ENCODE measurements at regions of chr4 and their contacts with region 1.

Region 1: DNA sequence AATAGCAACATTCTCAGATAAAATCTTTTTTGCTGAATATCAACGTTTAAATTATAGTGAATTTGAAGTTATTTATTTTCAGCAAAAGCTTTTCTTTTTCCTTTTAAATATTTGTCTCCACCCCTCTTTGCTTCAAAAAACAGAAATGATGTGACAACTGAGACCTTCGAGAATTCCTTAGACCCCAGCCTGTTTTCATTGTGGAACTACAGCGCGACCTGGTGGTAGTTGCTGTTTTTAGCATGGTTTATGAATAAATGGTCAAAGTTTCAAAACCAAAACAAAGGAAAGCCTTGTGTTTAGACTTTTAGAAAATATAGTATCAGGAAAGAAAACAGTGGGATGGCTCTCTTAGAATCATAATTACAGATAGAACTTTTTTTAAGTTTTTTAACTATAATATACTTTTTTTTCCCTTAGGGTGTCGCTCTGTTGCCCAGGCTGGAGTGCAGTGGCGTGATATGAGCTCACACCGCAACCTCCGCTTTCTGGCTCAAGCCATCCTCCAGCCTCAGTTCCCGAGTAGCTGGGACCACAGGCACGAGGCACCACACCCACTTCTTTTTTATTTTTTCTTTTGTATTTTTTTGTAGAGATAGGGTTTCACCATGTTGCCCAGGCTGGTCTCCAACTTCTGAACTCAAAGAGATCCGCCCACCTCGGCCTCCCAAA is 26.8 kb upstream of the TMEM184C start:
- DNase-seq: peak in 4 of 5 donors; percentile 22 to 51 (median 45)
- ATAC-seq: peak in 2 of 4 donors; percentile 53 to 65
- H3K4me3 ChIP-seq: peak overlapping the region in 2 of 12 donors; percentile 28 to 33
- H3K27ac ChIP-seq: peak overlapping the region in 1 of 12 donors; percentile 16
- H3K4me1 ChIP-seq: peaks cover 0 to 12% (median 0%) of the 10 kb centered on the region in 12 donors
- H3K27me3 ChIP-seq: no peaks in the 10 kb centered on the region
- CTCF ChIP-seq: peak; percentile 54 to 83 (median 71)
- POLR2A ChIP-seq: no peak

Region 2: DNA sequence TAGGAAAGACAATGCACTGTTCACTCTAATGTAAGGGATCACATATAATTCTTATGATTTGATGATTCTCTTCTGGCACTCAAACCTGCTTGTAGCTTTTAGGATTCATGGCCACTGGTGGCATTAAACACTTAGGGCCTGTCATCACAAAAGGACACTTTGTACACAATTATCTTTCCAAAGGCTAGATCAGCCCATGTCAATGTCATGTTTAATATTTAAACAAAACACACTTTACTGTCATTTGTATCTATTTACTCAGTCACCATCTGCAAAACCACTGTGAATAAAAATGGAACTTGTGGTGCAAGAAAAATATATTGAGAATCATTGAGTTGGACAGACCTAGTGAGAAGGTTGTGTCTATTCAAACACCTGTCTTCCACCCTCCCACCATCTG is 561.1 kb before region 1 on chr4:
- intact Hi-C with region 1: loop called in 4 of 10 experiments (anchors 5 to 10 kb)
- DNase-seq: no peak
- ATAC-seq: no peak
- H3K4me3 ChIP-seq: no peak overlapping the region
- H3K27ac ChIP-seq: no peak overlapping the region
- H3K4me1 ChIP-seq: no peaks in the 10 kb centered on the region
- H3K27me3 ChIP-seq: no peaks in the 10 kb centered on the region
- CTCF ChIP-seq: no peak
- POLR2A ChIP-seq: no peak

Region 3: DNA sequence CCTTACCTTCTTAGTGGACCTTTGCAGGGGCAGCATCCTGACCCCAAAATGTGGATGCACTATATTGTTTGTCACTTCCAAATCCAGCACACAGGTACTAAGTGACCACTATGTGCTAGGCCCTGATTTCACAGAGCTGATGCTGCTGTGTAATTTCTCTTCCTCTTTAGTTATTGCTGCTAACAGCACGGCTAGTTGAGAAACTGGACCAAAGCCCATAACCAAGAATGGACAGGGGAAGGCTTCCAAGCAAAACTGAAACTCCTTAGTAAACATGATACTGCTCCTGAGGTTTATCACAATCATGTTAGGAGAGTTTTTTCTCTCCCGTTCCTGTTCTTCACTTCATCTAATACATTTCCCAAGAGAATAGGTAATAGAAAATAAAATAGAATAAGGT is 471.9 kb before region 1 on chr4:
- intact Hi-C with region 1: loop called in 5 of 10 experiments (anchors 5 kb)
- DNase-seq: peak in 1 of 5 donors; percentile 35
- ATAC-seq: peak; percentile 65 to 76 (median 72)
- H3K4me3 ChIP-seq: no peak overlapping the region
- H3K27ac ChIP-seq: peak overlapping the region in 5 of 12 donors; percentile 14 to 52 (median 42)
- H3K4me1 ChIP-seq: peaks cover 0 to 41% (median 18%) of the 10 kb centered on the region in 12 donors
- H3K27me3 ChIP-seq: no peaks in the 10 kb centered on the region
- CTCF ChIP-seq: no peak
- POLR2A ChIP-seq: no peak

Region 4: GRCh38 chr4:147334478-147334877 is 255.9 kb before region 1 on chr4:
- intact Hi-C with region 1: loop called in 1 of 10 experiments (anchors 10 kb)
- DNase-seq: no peak
- ATAC-seq: peak in 2 of 4 donors; percentile 64 to 76
- H3K4me3 ChIP-seq: no peak overlapping the region
- H3K27ac ChIP-seq: peak overlapping the region in 4 of 12 donors; percentile 11 to 44 (median 26)
- H3K4me1 ChIP-seq: peaks cover 0 to 11% (median 0%) of the 10 kb centered on the region in 12 donors
- H3K27me3 ChIP-seq: no peaks in the 10 kb centered on the region
- CTCF ChIP-seq: no peak
- POLR2A ChIP-seq: no peak

Region 5: DNA sequence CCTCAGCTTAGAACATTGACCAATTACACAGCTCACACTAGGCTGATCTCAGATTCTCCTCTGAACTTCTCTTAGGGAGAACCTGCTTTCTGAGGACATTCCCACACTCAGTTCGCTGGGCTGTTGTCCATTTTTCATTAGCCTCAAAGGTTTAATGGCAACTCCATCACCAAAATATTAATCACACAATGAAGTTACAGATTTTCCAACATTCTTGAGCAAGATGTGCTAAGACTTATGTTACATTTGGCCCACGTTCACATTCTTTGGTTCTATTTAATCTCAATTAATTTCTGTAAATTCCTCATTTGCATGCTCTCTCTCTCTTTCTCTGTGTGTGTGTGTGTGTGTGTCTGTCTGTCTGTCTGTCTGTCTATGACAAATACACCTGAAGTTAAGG is 191.8 kb before region 1 on chr4:
- intact Hi-C with region 1: no loop called
- DNase-seq: no peak
- ATAC-seq: no peak
- H3K4me3 ChIP-seq: no peak overlapping the region
- H3K27ac ChIP-seq: no peak overlapping the region
- H3K4me1 ChIP-seq: no peaks in the 10 kb centered on the region
- H3K27me3 ChIP-seq: no peaks in the 10 kb centered on the region
- CTCF ChIP-seq: no peak
- POLR2A ChIP-seq: no peak

Region 6: DNA sequence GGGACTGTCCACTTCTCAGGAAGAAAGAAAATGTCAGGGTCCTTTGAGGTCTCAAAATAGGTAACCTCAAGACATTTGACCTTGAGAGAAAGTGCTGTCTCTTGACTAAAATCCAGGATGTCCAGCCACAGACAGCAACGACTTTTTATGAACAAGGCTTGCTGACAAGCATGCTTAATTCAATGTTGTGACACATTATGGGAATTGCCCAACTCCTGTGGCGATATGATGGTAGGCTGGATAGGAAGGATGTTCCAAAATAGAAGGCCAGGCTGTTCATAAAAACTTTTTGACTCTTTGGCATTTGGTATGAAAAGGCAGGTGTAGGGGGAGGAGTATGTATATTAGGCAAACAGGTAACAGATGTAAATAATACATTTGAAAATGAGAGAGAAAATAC is 160.3 kb before region 1 on chr4:
- intact Hi-C with region 1: no loop called
- DNase-seq: no peak
- ATAC-seq: no peak
- H3K4me3 ChIP-seq: no peak overlapping the region
- H3K27ac ChIP-seq: no peak overlapping the region
- H3K4me1 ChIP-seq: no peaks in the 10 kb centered on the region
- H3K27me3 ChIP-seq: no peaks in the 10 kb centered on the region
- CTCF ChIP-seq: no peak
- POLR2A ChIP-seq: no peak

Region 7: GRCh38 chr4:147526272-147526654 is 64.1 kb before region 1 on chr4:
- intact Hi-C with region 1: loop called in 1 of 10 experiments (anchors 10 kb)
- DNase-seq: peak in 2 of 5 donors; percentile 38 to 49
- ATAC-seq: peak; percentile 74 to 86 (median 81)
- H3K4me3 ChIP-seq: no peak overlapping the region
- H3K27ac ChIP-seq: peak overlapping the region in 4 of 12 donors; percentile 9 to 37 (median 20)
- H3K4me1 ChIP-seq: peaks cover 0 to 21% (median 7%) of the 10 kb centered on the region in 12 donors
- H3K27me3 ChIP-seq: no peaks in the 10 kb centered on the region
- CTCF ChIP-seq: peak in 7 of 12 donors; percentile 7 to 48 (median 17)
- POLR2A ChIP-seq: no peak